Head of caudate nucleus (tissue), 42 donors: ENCODE measurements at regions of chr7 and their contacts with region 1.

Region 1: DNA sequence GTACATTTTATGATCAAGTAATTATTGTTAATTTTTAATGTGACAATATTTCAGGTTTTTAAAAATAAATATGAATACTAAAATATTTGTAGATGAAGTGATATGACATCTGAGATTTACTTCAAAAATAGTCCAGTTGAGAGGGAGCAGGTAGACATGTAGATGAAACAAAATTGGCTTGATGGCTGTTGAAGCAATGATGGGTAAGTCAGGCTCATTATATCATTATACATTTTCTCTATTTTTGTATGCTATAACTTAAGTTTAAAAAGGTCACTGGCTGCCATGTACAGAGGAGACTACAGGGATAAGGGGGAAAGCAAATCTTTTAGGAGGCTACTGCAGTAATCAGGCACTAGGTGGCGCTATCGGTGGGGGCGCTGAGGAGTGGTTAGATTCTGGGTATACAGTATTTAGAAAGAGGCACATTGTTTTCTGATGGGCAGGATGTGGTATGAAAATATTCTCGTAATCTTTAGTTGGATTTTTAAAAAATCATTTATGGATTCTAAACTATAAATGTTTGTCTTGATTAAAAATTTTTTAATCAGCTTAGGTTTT is 189.8 kb upstream of the IMMP2L start:
- DNase-seq: peak in 41 of 42 donors; percentile 44 to 88 (median 70)

Region 2: DNA sequence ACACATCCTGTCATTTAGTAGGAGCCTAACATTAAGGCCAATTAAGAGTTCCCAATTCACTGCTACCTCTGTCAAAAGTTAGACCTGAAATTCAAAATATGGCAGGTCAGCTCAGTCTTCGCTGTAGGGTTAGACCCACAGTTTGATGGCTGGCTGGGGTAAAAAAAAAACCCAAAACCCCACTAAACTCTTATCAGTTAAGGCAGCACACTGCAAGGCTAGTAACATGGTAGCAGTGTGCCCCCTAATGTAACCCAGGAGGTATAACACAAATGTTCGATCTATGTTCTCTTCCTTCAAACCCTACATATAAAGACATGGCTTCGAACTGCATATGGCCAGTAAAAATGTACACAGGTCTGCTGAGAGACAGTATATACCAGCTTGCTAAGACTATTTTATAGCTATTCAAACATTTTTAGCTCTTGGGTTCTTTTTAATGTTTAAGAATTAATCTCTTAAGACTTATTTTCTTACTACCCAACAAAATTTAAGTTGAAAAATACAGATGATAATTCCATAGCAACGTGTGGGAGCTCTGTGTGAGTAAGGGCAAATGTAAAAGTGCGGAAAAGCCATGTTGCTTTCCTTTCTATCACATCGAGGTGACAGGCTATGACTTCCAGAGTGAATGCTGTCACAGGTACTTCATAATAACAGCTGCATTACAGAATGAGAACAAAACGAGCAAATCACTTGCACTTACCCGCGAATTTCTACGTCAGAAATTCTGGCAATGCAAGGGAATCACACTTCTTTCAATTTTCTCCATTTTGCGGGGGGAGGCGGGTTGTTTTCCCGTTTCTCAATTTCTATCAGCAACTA is 21.4 kb before region 1 on chr7:
- intact Hi-C with region 1: no loop called
- DNase-seq: no peak

Region 3: DNA sequence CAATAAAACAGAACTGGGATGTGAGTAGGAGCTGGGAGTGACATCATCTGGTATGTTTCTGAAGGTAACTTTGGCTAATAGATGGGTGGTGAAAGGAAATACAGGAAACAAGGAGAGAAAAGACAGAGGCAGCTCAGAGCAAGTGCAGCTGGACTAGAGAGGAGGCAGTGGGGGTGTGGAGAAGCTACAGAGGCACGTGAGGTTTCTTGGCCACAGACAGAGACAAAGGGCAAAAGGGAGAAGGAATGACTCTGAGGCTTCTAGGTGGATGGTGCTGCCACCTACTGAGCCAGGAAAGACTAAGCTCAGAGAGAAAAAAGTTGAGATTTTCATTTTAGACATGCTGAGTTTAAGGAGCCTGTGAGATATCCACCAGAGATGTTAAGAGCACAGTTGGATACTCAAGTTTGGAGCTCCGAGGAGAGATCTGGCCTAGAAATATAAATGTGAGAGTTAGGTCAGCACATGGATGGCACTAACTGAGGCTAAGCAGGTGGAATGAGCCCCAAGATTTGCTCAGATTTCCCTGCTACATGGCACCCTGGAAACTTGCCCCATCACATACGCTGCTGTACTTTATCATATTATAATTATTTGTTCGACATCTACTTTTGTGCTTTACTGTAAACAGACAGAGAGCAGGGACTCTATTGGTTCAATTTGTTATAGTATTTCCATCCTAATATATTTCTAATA is 103.2 kb after region 1 on chr7:
- intact Hi-C with region 1: loop called (anchors 5 kb)
- DNase-seq: peak in 41 of 42 donors; percentile 19 to 87 (median 64)

Region 4: GRCh38 chr7:111987115-111987826 is 235.2 kb after region 1 on chr7:
- intact Hi-C with region 1: no loop called
- DNase-seq: no peak

Region 5: DNA sequence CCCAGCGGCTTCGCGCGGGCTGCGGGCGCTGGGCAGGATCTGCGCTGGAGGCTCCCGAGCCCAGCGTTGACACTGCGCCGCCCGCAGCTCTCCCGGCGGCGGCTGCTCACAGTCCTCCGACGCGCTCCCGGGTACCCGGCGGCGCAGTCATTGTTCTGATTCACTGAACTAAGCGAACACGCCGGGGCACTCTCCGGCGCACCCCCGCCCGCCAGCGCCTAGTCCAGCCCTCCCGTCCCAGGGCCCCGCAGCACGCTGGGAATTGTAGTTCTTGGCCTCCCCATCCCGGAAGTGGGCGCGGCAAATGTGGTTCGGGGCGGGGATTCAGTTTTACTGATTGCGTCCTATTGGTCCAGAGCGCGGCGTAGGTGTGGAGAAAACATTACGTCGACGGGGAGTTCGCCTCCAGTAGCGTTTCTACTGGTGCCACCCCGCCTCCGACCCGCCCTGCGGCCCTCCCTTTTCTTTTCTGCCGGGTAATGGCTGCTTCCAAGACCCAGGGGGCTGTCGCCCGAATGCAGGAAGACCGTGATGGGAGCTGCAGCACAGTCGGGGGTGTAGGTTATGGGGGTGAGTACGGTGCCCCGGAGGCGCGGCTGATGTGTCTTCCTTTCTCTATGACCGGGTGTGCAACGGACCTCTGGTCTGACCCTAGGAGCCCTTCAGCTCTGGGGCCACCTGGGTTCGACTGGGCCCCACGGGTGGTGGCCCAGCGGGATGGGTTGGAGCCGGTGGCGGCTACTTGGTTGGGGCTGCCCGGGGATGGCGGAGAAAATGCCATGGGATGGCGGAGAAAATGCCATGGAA is 454.3 kb after region 1 on chr7 and contains the starts of genes DOCK4 and ZNF277:
- intact Hi-C with region 1: loop called (anchors 10 kb)
- DNase-seq: peak; percentile 98 to 100 (median 99)